Prostate gland (tissue), 2 donors: ENCODE measurements at regions of chr12 and their contacts with region 1.

Region 1: GRCh38 chr12:122067966-122068365 is 10.6 kb upstream of the MLXIP start:
- DNase-seq: peak; percentile 38
- H3K4me3 ChIP-seq: no peak overlapping the region
- H3K27ac ChIP-seq: peak overlapping the region in 1 of 2 donors; percentile 33
- H3K4me1 ChIP-seq: peaks cover 16% of the 10 kb centered on the region
- H3K27me3 ChIP-seq: no peaks in the 10 kb centered on the region
- CTCF ChIP-seq: peak in 1 of 4 experiments; percentile 30
- POLR2A ChIP-seq: no peak

Region 2: DNA sequence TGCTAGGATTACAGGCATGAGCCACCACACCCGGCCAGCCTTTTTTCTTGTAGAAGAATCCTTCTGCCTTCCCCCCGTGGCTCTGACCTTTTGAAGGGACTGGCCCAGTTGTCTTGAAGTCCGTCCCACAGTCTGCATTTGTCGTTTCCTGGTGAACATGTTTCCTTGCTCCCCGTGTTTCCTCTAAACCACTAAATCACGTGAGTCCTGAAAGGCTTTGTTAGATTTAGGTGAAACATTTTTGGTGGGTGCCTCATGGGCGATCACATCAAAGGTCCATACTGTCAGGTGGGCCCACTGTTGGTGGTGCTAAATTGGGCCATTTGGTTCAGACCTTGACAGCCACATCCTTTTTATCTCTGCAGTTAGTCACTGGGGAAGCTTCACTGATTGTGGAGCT is 36.9 kb after region 1 on chr12:
- intact Hi-C with region 1: loop called (anchors 5 kb)
- DNase-seq: no peak
- H3K4me3 ChIP-seq: no peak overlapping the region
- H3K27ac ChIP-seq: no peak overlapping the region
- H3K4me1 ChIP-seq: peaks cover 3% of the 10 kb centered on the region
- H3K27me3 ChIP-seq: no peaks in the 10 kb centered on the region
- CTCF ChIP-seq: no peak
- POLR2A ChIP-seq: no peak

Region 3: GRCh38 chr12:122500685-122501488 is 432.9 kb after region 1 on chr12 and contains the start of gene ZCCHC8:
- intact Hi-C with region 1: no loop called
- DNase-seq: peak; percentile 98
- H3K4me3 ChIP-seq: peak within 1 kb of the TSS; percentile 79 to 80
- H3K27ac ChIP-seq: peak within 1 kb of the TSS; percentile 98 to 99
- H3K4me1 ChIP-seq: no peaks in the 10 kb centered on the region
- H3K27me3 ChIP-seq: no peaks in the 10 kb centered on the region
- CTCF ChIP-seq: peak in 2 of 4 experiments; percentile 58 to 79
- POLR2A ChIP-seq: peak; percentile 99
- total RNA-seq, gene ZCCHC8: 17.3 to 20.1 TPM